ENCODE measurements at regions of chr12 and their contacts with region 1.

Region 1: DNA sequence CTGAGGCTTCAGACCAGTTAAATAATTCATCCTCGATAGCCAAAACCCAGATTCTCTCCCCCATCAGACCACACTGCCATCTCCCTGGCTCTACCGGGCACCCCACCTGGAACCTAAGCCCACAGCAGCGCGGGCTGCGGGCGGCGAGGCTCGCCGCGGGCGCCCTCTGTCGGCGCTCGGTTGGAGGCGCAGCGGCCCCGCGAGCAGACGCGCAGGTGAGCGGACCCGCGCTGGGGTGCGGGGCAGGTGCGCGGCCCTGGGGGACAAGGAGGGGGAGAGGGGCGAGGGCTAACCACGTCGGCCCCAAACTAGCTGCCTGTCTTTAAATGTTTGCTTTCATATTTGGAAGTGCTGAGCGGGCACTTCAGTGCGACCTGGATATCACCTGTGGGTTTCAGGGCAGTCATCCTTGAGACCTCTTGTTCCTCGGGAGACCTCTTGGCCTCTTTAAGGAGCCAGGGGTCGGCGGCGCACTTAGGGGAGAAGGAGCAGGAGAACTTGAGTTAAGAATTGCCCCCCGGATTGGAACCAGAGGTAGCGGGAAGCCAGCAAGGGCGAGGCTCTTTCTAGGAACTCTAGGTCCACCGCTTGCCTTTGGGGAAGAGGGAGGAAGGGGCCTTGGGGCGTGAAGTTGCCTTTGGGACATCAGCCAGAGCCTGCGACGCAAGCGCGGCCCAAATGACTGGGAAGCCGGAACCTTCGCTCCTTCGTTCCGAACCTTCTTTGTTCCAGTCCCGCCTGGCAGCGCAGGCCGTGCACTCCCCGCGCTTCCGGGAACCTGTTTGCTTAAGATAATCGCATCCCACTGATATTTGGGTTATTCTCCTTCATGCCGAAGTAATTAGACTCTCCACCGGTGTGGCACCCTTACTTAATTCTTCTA is 78.7 kb downstream of the NEDD1 start:
- DNase-seq: peak in 1 of 2 experiments; percentile 29
- H3K4me3 ChIP-seq: no peak overlapping the region
- H3K4me1 ChIP-seq: peaks cover 6% of the 10 kb centered on the region
- H3K27me3 ChIP-seq: peaks cover 26% of the 10 kb centered on the region

Region 2: DNA sequence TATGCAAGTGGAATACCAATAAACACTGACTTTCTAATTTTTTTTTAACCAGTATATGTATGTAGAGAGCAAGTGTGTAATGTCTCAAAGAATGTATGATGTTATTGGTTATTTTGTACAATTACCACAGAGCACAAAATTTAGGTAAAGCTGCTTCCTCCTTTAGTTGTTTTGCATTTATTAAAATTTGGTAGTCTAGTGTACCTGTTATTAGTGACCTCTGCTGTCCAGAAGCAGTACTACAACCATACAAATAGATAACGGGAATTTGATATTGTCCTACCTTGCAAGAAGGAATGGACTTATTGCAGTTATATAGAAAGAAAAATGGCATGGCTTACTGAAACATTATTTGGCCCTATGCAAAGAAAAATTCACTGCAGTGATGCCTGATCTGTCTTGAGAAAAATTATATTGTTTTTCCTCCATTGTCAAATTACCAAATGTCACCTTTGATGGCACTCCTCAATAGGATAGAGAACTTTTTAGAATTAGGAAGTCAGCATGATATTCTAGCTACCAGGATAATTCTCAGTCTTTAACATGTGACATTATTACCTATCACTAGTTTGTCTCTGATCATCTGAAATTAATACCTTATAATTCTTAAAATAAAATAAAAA is 323.0 kb after region 1 on chr12:
- in situ Hi-C with region 1: loop called (anchors 25 kb)
- DNase-seq: peak; percentile 29 to 58
- H3K4me3 ChIP-seq: no peak overlapping the region
- H3K4me1 ChIP-seq: no peaks in the 10 kb centered on the region
- H3K27me3 ChIP-seq: peaks cover 3% of the 10 kb centered on the region; the same call in 1 of the 2 replicates

Region 3: DNA sequence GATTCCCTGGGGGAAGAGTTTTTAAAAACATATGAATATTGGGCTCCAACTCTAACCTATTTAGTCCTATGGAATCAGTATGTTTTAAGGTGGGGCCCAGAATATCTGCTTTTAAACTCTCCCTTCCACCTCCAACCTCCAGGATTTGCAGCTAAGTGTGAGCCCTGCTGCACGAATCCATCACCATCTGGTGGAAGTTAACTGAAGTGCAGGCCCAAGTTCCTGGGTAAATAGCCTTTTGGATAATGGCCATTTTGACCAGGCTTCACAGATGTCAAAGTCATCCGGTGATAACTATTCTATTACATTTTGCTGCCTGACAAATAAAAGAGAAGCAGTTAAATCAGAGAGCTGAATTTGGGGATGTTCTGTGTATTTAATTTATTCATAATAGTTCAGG is 418.8 kb after region 1 on chr12:
- in situ Hi-C with region 1: loop called (anchors 25 kb)
- DNase-seq: peak; percentile 43 to 60
- H3K4me3 ChIP-seq: no peak overlapping the region
- H3K4me1 ChIP-seq: no peaks in the 10 kb centered on the region
- H3K27me3 ChIP-seq: no peaks in the 10 kb centered on the region; the same call in none of the 2 replicates

Region 4: GRCh38 chr12:98002712-98003493 is 1017.2 kb after region 1 on chr12:
- in situ Hi-C with region 1: loop called (anchors 25 kb)
- DNase-seq: peak; percentile 55 to 71
- H3K4me3 ChIP-seq: no peak overlapping the region
- H3K4me1 ChIP-seq: no peaks in the 10 kb centered on the region
- H3K27me3 ChIP-seq: no peaks in the 10 kb centered on the region

Region 5: GRCh38 chr12:98397316-98398105 is 1411.8 kb after region 1 on chr12:
- in situ Hi-C with region 1: loop called (anchors 25 kb)
- DNase-seq: peak; percentile 74 to 87
- H3K4me3 ChIP-seq: peak overlapping the region; percentile 8; the same call in 1 of the 2 replicates
- H3K4me1 ChIP-seq: peaks cover 6% of the 10 kb centered on the region; the same call in 1 of the 2 replicates
- H3K27me3 ChIP-seq: no peaks in the 10 kb centered on the region